ENCODE measurements at regions of chr12 and their contacts with region 1.

Region 1: GRCh38 chr12:57213058-57213715 is 3.4 kb upstream of the NXPH4 start:
- DNase-seq: peak; percentile 94
- ATAC-seq: peak; percentile 70

Region 2: DNA sequence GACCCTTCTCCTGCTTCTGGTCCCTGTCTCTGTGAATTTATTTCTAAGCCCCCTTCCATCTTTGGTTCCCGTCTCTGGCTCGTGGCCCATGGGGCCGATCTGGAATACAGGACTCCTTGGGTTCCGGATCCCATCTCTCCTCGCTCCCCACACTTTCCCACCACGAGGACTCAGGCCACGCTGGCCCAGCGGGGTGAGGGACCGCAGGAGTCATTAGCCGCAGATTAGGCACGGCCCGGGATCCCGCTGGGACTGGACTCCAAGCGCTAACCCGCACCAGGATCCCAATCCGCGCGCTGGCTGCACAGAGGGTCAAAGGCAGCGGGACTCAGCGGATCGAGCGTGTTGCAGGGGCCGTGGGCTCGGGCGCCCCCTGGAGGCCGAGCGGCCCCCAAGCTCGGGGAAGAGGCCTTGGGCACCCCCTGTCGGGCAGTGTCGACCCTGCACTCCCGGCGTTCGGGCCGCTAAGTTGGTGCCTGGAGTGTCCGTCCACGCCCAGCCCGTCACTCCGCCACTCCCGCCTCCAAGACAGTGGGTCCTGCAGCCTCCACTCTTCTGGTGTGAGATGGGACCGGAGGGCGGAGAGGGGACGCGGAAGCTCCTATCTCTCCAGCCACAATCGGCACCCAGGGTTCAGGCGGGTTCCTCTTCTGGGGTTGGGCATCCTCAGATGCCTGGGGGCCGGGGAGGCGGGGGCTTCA is 25.8 kb after region 1 on chr12:
- intact Hi-C with region 1: loop called (anchors 1 kb)
- DNase-seq: peak; percentile 92
- ATAC-seq: peak; percentile 77

Region 3: GRCh38 chr12:57276935-57277563 is 63.9 kb after region 1 on chr12:
- intact Hi-C with region 1: loop called (anchors 2 kb)
- DNase-seq: no peak
- ATAC-seq: no peak

Measured in Right ventricle myocardium inferior (tissue), 1 donor.